ENCODE measurements at regions of chr12 and their contacts with region 1.

Region 1: GRCh38 chr12:92779902-92780301 is 77.1 kb downstream of the PLEKHG7 start:
- DNase-seq: no peak

Region 2: DNA sequence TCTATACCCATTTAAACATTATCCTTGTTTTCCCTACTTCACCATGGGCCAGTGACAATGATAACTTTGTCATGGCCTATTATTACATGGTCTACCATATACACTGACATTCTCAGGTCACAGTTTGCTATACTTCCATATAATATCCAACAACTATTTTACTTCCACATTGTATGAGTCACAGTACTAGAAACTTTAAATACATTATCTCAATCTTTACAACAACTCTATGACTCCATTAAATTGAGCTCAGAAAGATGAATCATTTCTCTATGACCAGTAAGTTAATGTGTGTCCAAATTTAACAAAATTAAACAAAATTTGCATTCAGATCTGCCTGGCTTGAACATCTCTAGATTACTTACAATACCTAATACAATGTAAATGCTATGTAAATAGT is 16.7 kb after region 1 on chr12:
- intact Hi-C with region 1: no loop called
- DNase-seq: no peak

Region 3: GRCh38 chr12:93476555-93476954 is 696.7 kb after region 1 on chr12:
- intact Hi-C with region 1: loop called in 1 of 2 experiments (anchors 5 kb)
- DNase-seq: no peak

Measured in posterior vena cava (tissue), 2 donors.